ENCODE measurements at regions of chr2 and their contacts with region 1.

Region 1: GRCh38 chr2:46364797-46365457 is 67.7 kb downstream of the EPAS1 start:
- DNase-seq: no peak
- ATAC-seq: peak in 1 of 2 donors; percentile 44
- H3K4me3 ChIP-seq: no peak overlapping the region
- H3K27ac ChIP-seq: no peak overlapping the region
- H3K4me1 ChIP-seq: peaks cover 2% of the 10 kb centered on the region
- H3K27me3 ChIP-seq: no peaks in the 10 kb centered on the region

Region 2: GRCh38 chr2:46010925-46011490 is 353.9 kb before region 1 on chr2:
- intact Hi-C with region 1: loop called in 3 of 4 experiments (anchors 5 to 10 kb)
- DNase-seq: no peak
- ATAC-seq: peak; percentile 38 to 42
- H3K4me3 ChIP-seq: no peak overlapping the region
- H3K27ac ChIP-seq: no peak overlapping the region
- H3K4me1 ChIP-seq: peaks cover 7% of the 10 kb centered on the region
- H3K27me3 ChIP-seq: no peaks in the 10 kb centered on the region